ENCODE measurements at regions of chr1 and their contacts with region 1.

Region 1: DNA sequence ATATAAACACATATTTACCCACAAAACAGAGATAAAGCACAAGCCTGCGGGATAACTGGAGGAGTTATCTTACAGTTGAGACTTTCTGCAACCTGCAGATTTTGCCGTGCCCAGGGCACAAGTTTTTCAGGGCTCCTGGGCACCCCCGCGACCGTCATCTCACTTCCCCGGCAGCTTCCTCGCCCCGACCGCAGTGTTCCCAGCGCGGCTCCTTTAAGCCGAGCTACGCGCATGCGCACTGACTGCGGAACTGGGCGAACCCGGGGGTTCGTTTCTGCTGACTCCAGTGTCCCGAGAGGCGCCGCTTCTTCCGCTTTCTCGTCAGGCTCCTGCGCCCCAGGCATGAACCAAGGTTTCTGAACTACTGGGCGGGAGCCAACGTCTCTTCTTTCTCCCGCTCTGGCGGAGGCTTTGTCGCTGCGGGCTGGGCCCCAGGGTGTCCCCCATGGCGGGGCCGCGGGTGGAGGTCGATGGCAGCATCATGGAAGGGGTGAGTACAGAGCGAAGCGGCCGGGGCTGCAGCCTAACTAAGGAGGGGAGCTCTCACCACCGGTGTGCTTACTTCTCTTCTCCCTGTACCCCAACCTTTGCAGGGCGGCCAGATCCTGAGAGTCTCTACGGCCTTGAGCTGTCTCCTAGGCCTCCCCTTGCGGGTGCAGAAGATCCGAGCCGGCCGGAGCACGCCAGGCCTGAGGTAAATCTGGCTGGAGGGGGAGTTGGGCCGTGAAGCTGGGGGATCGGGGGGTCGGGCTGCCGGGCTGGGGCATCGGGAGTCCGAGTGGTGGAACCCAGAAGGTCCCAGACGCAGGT is at the start of gene RTCA:
- DNase-seq: peak; percentile 99
- total RNA-seq, gene RTCA: 34.4 TPM

Region 2: GRCh38 chr1:100090471-100090870 is 175.7 kb before region 1 on chr1:
- intact Hi-C with region 1: no loop called
- DNase-seq: no peak

Region 3: DNA sequence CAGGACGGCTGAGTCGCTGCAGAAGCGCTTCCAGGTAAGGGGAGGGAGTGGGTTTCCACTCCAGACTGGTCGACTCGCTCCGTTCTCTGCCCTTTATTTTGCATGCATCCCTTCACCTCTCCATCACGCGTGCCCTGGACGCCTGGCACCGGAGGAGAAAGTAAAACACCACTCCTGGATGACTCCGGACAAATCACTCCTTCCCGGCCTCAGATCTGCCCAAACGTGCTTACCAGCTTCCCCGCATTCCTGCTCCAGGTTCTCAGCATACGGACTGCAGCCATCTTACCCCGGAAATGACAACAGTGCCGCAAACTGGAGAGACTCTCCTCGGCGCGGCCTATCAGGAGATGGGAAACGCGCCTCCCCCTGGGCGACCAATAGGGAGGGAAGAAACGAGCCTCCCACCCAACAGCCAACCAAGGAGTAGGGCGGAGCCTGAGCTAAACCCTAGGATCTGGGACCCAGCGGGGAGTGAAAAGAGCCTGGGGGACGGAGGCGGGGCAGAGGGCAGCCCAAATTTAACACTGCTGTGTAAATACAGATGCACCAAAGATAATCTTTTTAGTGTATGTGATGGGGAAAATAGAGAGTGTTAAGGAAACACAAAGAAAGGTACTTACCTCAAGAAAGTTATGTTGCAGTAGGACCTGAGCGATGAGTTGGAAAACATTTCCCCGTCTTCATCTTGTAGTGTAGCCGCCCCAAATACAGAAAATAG is 16.4 kb before region 1 on chr1 and contains the start of gene DBT:
- intact Hi-C with region 1: loop called (anchors 2 kb)
- DNase-seq: peak; percentile 97
- total RNA-seq, gene DBT: 29.3 TPM